ENCODE measurements at regions of chr16 and their contacts with region 1.

Region 1: DNA sequence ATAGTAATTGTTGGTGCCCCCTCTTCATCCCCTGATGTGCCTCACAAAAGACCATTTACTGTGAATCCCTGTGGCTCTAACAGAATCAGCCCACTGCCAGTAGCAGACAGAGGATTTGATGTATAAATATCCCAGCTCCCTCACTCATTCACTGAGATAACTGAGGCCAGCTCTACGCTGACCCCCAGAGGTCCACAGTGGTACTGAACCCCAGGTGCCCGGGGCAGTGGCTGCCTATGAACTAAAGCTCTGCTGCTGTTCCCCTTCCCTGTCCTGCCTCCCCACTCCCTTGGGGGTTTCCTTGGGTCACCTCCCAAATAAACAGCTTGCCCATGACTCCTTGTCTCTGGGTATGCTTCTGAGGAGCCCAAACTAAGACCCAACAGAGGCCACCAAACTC is 295.8 kb downstream of the FOXL1 start:
- DNase-seq: peak; percentile 41
- H3K4me3 ChIP-seq: no peak overlapping the region
- H3K27ac ChIP-seq: no peak overlapping the region
- H3K4me1 ChIP-seq: no peaks in the 10 kb centered on the region
- H3K27me3 ChIP-seq: no peaks in the 10 kb centered on the region
- CTCF ChIP-seq: peak; percentile 72

Region 2: GRCh38 chr16:86575754-86576557 is 298.2 kb before region 1 on chr16:
- CTCF ChIA-PET with region 1: interaction called, 3 read pairs
- POLR2A ChIA-PET with region 1: no interaction called
- intact Hi-C with region 1: loop called (anchors 10 kb)
- DNase-seq: peak; percentile 93
- H3K4me3 ChIP-seq: peak overlapping the region; percentile 54
- H3K27ac ChIP-seq: no peak overlapping the region
- H3K4me1 ChIP-seq: peaks cover 17% of the 10 kb centered on the region
- H3K27me3 ChIP-seq: peaks cover 3% of the 10 kb centered on the region
- CTCF ChIP-seq: peak; percentile 80

Region 3: DNA sequence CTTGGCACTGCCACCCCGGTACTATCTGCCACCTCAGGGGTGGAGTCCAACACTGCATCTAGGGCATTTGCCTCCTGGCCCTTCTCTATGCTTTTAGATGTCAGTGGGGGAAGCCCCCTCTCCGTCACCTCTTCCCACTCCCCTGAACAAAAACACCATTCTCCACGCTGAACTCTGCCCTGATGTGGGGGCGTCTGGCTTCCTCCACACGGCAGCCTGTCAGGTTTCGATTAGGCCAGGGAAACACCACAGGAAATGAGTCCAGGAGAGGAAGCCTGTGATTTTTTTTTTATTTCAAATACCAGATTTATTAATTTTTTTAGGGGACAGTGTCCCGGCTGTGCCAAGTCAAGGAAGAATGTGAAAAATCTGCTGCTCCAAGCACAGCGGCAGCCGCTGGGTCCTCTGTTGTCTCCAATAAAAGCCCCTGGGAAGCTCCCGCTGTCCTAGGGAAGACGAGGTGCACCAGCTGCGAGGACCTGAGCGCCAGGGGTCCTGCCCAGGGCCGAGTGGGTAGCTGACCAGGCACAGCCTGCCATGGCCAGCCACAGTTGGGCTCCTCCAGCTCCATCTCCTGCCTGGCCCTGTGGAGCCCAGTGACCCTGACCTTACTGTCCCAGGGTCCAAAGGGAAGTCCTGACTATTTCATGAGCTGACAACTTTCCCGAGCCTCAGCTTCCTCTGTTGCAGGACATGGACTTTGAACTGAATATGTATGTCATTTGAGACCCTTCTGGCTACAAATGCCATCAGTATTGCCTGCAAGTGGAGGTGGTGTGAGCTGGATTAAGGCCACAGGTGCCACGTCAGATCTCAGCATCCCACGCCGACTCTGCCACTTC is 41.0 kb after region 1 on chr16:
- CTCF ChIA-PET with region 1: no interaction called
- POLR2A ChIA-PET with region 1: no interaction called
- intact Hi-C with region 1: no loop called
- DNase-seq: no peak
- H3K4me3 ChIP-seq: no peak overlapping the region
- H3K27ac ChIP-seq: no peak overlapping the region
- H3K4me1 ChIP-seq: peaks cover 14% of the 10 kb centered on the region
- H3K27me3 ChIP-seq: no peaks in the 10 kb centered on the region
- CTCF ChIP-seq: no peak

Measured in A673 (cell line).